ENCODE measurements at regions of chrX and their contacts with region 1.

Region 1: GRCh38 chrX:23901805-23902204 is 5.9 kb downstream of the APOO start:
- DNase-seq: peak; percentile 84
- H3K4me3 ChIP-seq: peak overlapping the region; percentile 16
- H3K27ac ChIP-seq: peak overlapping the region; percentile 34
- H3K4me1 ChIP-seq: peaks cover 27% of the 10 kb centered on the region
- H3K27me3 ChIP-seq: peaks cover 9% of the 10 kb centered on the region
- CTCF ChIP-seq: peak; percentile 56

Region 2: DNA sequence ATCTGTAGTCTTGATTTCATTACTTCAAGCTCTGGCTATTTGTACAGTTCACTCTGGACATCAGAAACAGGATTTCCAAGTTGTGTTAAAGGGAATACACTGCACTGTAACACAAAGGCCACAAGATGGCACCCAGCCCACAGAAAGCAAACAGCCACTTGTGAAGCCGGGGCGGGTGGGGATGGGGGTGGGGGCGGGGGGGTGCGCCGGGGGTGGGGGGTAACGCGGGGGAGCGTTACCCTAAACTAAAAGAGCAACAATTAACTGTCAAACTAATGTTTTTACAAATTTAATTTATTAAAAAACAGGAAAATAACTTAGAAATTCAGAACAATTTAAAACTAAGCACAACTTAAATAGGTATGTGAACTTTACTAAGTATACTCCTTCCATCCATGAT is 207.2 kb before region 1 on chrX:
- CTCF ChIA-PET with region 1: interaction called, 11 read pairs
- POLR2A ChIA-PET with region 1: interaction called, 10 read pairs
- intact Hi-C with region 1: loop called (anchors 1 kb)
- DNase-seq: peak; percentile 75
- H3K4me3 ChIP-seq: no peak overlapping the region
- H3K27ac ChIP-seq: no peak overlapping the region
- H3K4me1 ChIP-seq: no peaks in the 10 kb centered on the region
- H3K27me3 ChIP-seq: no peaks in the 10 kb centered on the region
- CTCF ChIP-seq: peak; percentile 53

Region 3: DNA sequence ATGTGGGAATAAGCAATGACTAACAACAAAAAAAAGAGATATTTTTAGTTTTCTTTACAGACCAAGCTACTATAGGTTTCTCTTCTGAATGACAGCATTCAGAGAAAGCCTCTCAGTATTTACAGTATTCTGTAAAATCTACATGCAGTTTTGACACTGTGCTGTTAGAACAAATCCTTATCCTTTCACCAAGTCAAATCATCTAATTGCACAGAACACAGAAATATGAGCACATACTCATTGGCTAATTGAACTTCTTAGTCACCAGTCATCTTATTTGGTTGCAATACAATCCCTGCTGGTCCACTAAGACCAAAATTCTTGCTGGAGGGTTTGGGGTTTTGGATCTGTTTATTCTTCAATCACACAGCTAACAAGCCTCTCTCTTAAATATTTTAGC is 164.4 kb before region 1 on chrX:
- CTCF ChIA-PET with region 1: no interaction called
- POLR2A ChIA-PET with region 1: no interaction called
- intact Hi-C with region 1: no loop called
- DNase-seq: no peak
- H3K4me3 ChIP-seq: no peak overlapping the region
- H3K27ac ChIP-seq: no peak overlapping the region
- H3K4me1 ChIP-seq: peaks cover 6% of the 10 kb centered on the region
- H3K27me3 ChIP-seq: no peaks in the 10 kb centered on the region
- CTCF ChIP-seq: no peak

Region 4: DNA sequence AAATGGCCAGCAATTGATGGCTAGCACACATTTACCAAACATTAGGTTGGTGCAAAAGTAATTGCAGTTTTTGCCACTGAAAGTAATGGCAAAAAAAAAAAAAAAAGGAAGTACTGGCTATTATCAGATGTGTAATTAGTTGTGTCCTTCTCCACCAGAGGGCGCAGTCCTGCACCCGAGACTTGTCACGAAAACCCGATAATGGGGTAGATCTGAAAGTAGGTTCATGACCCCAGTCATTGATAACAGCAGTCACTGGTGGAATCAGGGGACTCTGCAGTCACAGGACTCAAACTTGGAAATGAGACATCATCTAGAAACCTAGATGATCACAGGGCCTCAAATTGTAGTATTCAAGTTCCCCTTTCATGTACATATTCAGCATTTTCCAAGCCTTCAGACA is 145.6 kb before region 1 on chrX:
- CTCF ChIA-PET with region 1: interaction called, 7 read pairs
- POLR2A ChIA-PET with region 1: no interaction called
- intact Hi-C with region 1: loop called (anchors 1 kb)
- DNase-seq: peak; percentile 80
- H3K4me3 ChIP-seq: no peak overlapping the region
- H3K27ac ChIP-seq: no peak overlapping the region
- H3K4me1 ChIP-seq: no peaks in the 10 kb centered on the region
- H3K27me3 ChIP-seq: no peaks in the 10 kb centered on the region
- CTCF ChIP-seq: peak; percentile 81

Region 5: GRCh38 chrX:23782863-23783568 is 118.8 kb before region 1 on chrX and contains the start of gene SAT1:
- CTCF ChIA-PET with region 1: interaction called, 28 read pairs
- POLR2A ChIA-PET with region 1: interaction called, 9 read pairs
- intact Hi-C with region 1: loop called (anchors 1 kb)
- DNase-seq: peak; percentile 97
- H3K4me3 ChIP-seq: peak within 1 kb of the TSS; percentile 65
- H3K27ac ChIP-seq: peak within 1 kb of the TSS; percentile 81
- H3K4me1 ChIP-seq: no peaks in the 10 kb centered on the region
- H3K27me3 ChIP-seq: no peaks in the 10 kb centered on the region
- CTCF ChIP-seq: peak; percentile 85
- total RNA-seq, gene SAT1: 21.6 and 27.4 TPM in 2 replicates

Measured in A673 (cell line).